B cell (primary cell): ENCODE measurements at regions of chr7 and their contacts with region 1.

Region 1: DNA sequence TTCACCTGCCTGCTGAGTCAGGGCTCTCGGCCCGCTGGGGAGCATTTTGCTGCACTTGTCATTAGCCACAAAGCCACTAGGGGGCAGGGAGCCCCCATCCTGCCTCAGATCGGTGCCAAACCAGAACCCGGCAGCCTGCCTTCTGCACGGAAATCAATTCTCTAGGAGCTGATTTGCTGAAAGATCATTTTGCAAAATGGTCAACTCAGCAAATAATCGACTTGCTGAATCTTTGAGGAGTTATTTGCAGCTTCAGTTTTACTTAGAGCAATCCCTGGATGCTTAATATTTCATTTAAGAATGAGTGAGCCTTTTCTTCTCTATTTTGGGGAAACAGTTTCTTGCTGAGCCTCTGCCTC is 1.7 kb upstream of the GIMAP8 start:
- DNase-seq: peak; percentile 83
- ATAC-seq: peak; percentile 84
- H3K4me3 ChIP-seq: no peak overlapping the region
- H3K4me3 Mint-ChIP-seq: peak overlapping the region; percentile 3
- H3K27ac ChIP-seq: no peak overlapping the region
- H3K27ac Mint-ChIP-seq: peak overlapping the region; percentile 54
- H3K4me1 ChIP-seq: peaks cover 29 to 43% of the 10 kb centered on the region in 2 donors
- H3K4me1 Mint-ChIP-seq: peaks cover 44% of the 10 kb centered on the region
- H3K27me3 ChIP-seq: peaks cover 0 to 37% (median 6%) of the 10 kb centered on the region in 4 experiments
- H3K27me3 Mint-ChIP-seq: peaks cover 24% of the 10 kb centered on the region
- CTCF ChIP-seq: peak; percentile 93

Region 2: GRCh38 chr7:150361807-150362621 is 86.8 kb before region 1 on chr7:
- CTCF ChIA-PET with region 1: interaction called, 3 read pairs
- POLR2A ChIA-PET with region 1: interaction called, 14 read pairs
- intact Hi-C with region 1: no loop called
- DNase-seq: no peak
- ATAC-seq: no peak
- H3K4me3 ChIP-seq: no peak overlapping the region
- H3K4me3 Mint-ChIP-seq: no peak overlapping the region
- H3K27ac ChIP-seq: no peak overlapping the region
- H3K27ac Mint-ChIP-seq: peak overlapping the region; percentile 7
- H3K4me1 ChIP-seq: peaks cover 51 to 57% of the 10 kb centered on the region in 2 donors
- H3K4me1 Mint-ChIP-seq: peaks cover 60% of the 10 kb centered on the region
- H3K27me3 ChIP-seq: no peaks in the 10 kb centered on the region
- H3K27me3 Mint-ChIP-seq: no peaks in the 10 kb centered on the region
- CTCF ChIP-seq: no peak

Region 3: GRCh38 chr7:150489782-150490181 is 41.0 kb after region 1 on chr7:
- CTCF ChIA-PET with region 1: no interaction called
- POLR2A ChIA-PET with region 1: no interaction called
- intact Hi-C with region 1: no loop called
- DNase-seq: no peak
- ATAC-seq: no peak
- H3K4me3 ChIP-seq: no peak overlapping the region
- H3K4me3 Mint-ChIP-seq: no peak overlapping the region
- H3K27ac ChIP-seq: no peak overlapping the region
- H3K27ac Mint-ChIP-seq: no peak overlapping the region
- H3K4me1 ChIP-seq: no peaks in the 10 kb centered on the region
- H3K4me1 Mint-ChIP-seq: no peaks in the 10 kb centered on the region
- H3K27me3 ChIP-seq: no peaks in the 10 kb centered on the region
- H3K27me3 Mint-ChIP-seq: peaks cover 9% of the 10 kb centered on the region
- CTCF ChIP-seq: no peak

Region 4: GRCh38 chr7:150753826-150754603 is 305.2 kb after region 1 on chr7:
- CTCF ChIA-PET with region 1: interaction called, 33 read pairs
- POLR2A ChIA-PET with region 1: no interaction called
- intact Hi-C with region 1: loop called (anchors 1 kb)
- DNase-seq: peak; percentile 19
- ATAC-seq: no peak
- H3K4me3 ChIP-seq: no peak overlapping the region
- H3K4me3 Mint-ChIP-seq: no peak overlapping the region
- H3K27ac ChIP-seq: no peak overlapping the region
- H3K27ac Mint-ChIP-seq: no peak overlapping the region
- H3K4me1 ChIP-seq: peaks cover 10% of the 10 kb centered on the region in 2 donors
- H3K4me1 Mint-ChIP-seq: peaks cover 11% of the 10 kb centered on the region
- H3K27me3 ChIP-seq: peaks cover 0 to 4% (median 0%) of the 10 kb centered on the region in 4 experiments
- H3K27me3 Mint-ChIP-seq: peaks cover 14% of the 10 kb centered on the region
- CTCF ChIP-seq: peak; percentile 31

Region 5: GRCh38 chr7:152025077-152025936 is 1576.5 kb after region 1 on chr7 and contains the start of gene GALNT11:
- CTCF ChIA-PET with region 1: no interaction called
- POLR2A ChIA-PET with region 1: no interaction called
- intact Hi-C with region 1: no loop called
- DNase-seq: peak; percentile 94
- ATAC-seq: peak; percentile 92
- H3K4me3 ChIP-seq: peak within 1 kb of the TSS; percentile 49 to 82 (median 72)
- H3K4me3 Mint-ChIP-seq: peak within 1 kb of the TSS; percentile 89
- H3K27ac ChIP-seq: peak within 1 kb of the TSS; percentile 65 to 82
- H3K27ac Mint-ChIP-seq: peak within 1 kb of the TSS; percentile 80
- H3K4me1 ChIP-seq: peaks cover 6 to 14% of the 10 kb centered on the region in 2 donors
- H3K4me1 Mint-ChIP-seq: peaks cover 16% of the 10 kb centered on the region
- H3K27me3 ChIP-seq: peaks cover 0 to 3% (median 0%) of the 10 kb centered on the region in 4 experiments
- H3K27me3 Mint-ChIP-seq: no peaks in the 10 kb centered on the region
- CTCF ChIP-seq: peak; percentile 41
- total RNA-seq, gene GALNT11: 14.5 and 15.2 TPM in 2 replicates